HepG2 (cell line): ENCODE measurements at regions of chr2 and their contacts with region 1.

Region 1: DNA sequence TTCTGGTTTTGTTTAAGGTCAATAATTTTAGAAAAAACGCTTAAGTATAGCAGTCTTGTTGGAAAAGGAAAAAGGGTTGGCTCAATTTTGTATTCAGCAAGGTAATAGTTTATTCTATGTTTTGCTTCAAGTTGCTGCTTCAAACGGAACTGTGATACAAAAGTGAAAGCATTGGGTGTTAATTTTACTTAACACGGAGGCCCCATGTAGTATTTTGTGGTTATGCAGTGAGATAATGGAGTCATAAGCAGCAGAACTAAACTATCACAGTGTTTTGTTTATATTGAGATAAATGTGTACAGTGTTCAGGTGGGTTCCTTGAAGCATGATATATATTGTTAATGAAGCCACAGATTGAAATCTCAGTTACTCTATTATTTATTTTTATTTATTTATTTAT is 67.0 kb upstream of the LYPD6B start:
- DNase-seq: no peak
- ATAC-seq: no peak
- H3K4me3 ChIP-seq: no peak overlapping the region
- H3K27ac ChIP-seq: no peak overlapping the region
- H3K4me1 ChIP-seq: no peaks in the 10 kb centered on the region
- H3K27me3 ChIP-seq: 0 out of 5 replicates have a peak, but pooled peaks cover 0 to 6% of the 10 kb centered on the region in 2 experiments
- CTCF ChIP-seq: no peak
- EP300 ChIP-seq: no peak
- POLR2A ChIP-seq: no peak
- RAD21 ChIP-seq: no peak

Region 2: DNA sequence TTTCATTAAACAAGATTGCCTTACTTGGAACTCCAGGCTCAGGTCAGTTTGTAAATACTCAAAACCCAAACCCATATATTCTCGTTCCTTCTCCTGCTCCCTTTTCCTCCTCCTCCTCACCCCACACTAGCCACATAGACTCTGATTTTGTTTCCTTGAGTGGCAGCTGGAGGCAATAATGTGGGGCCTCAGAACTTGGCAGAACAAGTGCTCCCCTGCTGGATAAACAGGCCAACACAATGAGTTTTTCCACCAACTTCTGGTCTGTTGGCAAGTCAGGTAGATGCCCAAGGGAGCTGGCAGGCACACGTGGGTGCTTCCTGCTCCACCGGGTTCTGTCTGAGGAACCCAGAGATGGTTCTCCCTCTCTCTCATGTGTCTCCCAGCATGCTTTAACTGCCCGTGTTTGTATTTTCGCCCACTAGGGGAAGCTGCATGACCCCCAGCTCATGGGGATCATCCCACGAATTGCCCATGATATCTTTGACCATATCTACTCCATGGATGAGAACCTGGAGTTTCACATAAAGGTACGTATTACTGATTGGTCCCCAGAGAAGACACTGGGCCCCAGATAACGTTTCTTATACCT is 34.6 kb before region 1 on chr2:
- CTCF ChIA-PET with region 1: no interaction called
- POLR2A ChIA-PET with region 1: no interaction called
- in situ Hi-C with region 1: no loop called
- intact Hi-C with region 1: loop called (anchors 2 kb)
- DNase-seq: no peak
- ATAC-seq: peak; percentile 67
- H3K4me3 ChIP-seq: no peak overlapping the region
- H3K27ac ChIP-seq: no peak overlapping the region
- H3K4me1 ChIP-seq: no peaks in the 10 kb centered on the region
- H3K27me3 ChIP-seq: no peaks in the 10 kb centered on the region
- CTCF ChIP-seq: no peak; the same call in 1 of the 2 replicates
- EP300 ChIP-seq: no peak
- POLR2A ChIP-seq: no peak
- RAD21 ChIP-seq: no peak